Activated CD4-positive, alpha-beta memory T cell treated with anti-CD3 and anti-CD28 coated beads for 36 hours (primary cell): ENCODE measurements at regions of chr13 and their contacts with region 1.

Region 1: GRCh38 chr13:110715395-110716235 is 2.1 kb downstream of the ING1 start:
- DNase-seq: peak; percentile 97
- H3K4me3 Mint-ChIP-seq: peak overlapping the region; percentile 96
- H3K27ac Mint-ChIP-seq: peak overlapping the region; percentile 98
- H3K4me1 Mint-ChIP-seq: peaks cover 33% of the 10 kb centered on the region
- H3K27me3 Mint-ChIP-seq: no peaks in the 10 kb centered on the region

Region 2: GRCh38 chr13:110615322-110616102 is 100.1 kb before region 1 on chr13 and contains the start of gene NAXD:
- CTCF ChIA-PET with region 1: no interaction called
- POLR2A ChIA-PET with region 1: interaction called, 9 read pairs
- intact Hi-C with region 1: loop called (anchors 1 kb)
- DNase-seq: peak; percentile 93
- H3K4me3 Mint-ChIP-seq: peak within 1 kb of the TSS; percentile 94
- H3K27ac Mint-ChIP-seq: peak within 1 kb of the TSS; percentile 88
- H3K4me1 Mint-ChIP-seq: peaks cover 48% of the 10 kb centered on the region
- H3K27me3 Mint-ChIP-seq: no peaks in the 10 kb centered on the region
- total RNA-seq, gene NAXD: 22.6 to 22.9 TPM

Region 3: GRCh38 chr13:110726726-110727125 is 11.1 kb after region 1 on chr13:
- CTCF ChIA-PET with region 1: no interaction called
- POLR2A ChIA-PET with region 1: interaction called, 4 read pairs
- intact Hi-C with region 1: loop called (anchors 1 kb)
- DNase-seq: peak; percentile 86
- H3K4me3 Mint-ChIP-seq: peak overlapping the region; percentile 24
- H3K27ac Mint-ChIP-seq: peak overlapping the region; percentile 71
- H3K4me1 Mint-ChIP-seq: peaks cover 19% of the 10 kb centered on the region
- H3K27me3 Mint-ChIP-seq: no peaks in the 10 kb centered on the region

Region 4: DNA sequence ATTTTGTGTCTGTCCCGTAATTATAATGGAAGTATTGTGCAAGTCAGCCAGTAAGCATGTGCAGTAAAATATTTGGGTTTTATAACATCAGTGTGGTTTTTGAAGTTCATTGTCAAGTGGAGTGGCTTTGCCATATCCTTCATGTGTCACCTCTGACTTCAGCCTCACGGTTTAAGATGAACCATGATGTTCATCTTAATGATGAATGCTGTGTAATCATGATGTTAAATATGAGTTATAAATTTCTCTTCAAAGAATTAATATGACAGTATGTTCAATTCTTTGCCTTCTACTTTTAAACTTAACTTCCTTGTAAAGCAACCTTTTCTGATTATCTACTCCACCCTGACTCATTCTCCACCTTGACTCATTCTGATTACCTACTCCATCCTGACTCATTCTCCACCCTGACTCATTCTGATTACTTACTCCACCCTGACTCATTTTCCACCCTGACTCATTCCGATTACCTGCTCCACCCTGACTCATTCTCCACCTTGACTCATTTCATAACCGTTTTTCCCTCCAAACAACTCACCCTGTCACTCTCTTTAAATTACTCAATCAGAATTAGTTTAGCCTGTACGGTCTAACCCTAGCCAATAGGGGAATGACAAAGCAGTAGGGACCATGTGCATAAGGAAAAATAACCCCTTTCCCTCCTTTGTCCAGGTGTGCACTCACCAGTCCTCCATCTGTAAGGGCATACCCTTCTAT is 249.6 kb after region 1 on chr13:
- CTCF ChIA-PET with region 1: no interaction called
- POLR2A ChIA-PET with region 1: no interaction called
- intact Hi-C with region 1: loop called (anchors 1 kb)
- DNase-seq: peak; percentile 64
- H3K4me3 Mint-ChIP-seq: peak overlapping the region; percentile 25
- H3K27ac Mint-ChIP-seq: peak overlapping the region; percentile 81
- H3K4me1 Mint-ChIP-seq: peaks cover 25% of the 10 kb centered on the region
- H3K27me3 Mint-ChIP-seq: peaks cover 6% of the 10 kb centered on the region

Region 5: GRCh38 chr13:111184458-111185401 is 469.1 kb after region 1 on chr13:
- CTCF ChIA-PET with region 1: no interaction called
- POLR2A ChIA-PET with region 1: no interaction called
- intact Hi-C with region 1: loop called (anchors 10 kb)
- DNase-seq: peak; percentile 60
- H3K4me3 Mint-ChIP-seq: peak overlapping the region; percentile 48
- H3K27ac Mint-ChIP-seq: peak overlapping the region; percentile 80
- H3K4me1 Mint-ChIP-seq: peaks cover 88% of the 10 kb centered on the region
- H3K27me3 Mint-ChIP-seq: no peaks in the 10 kb centered on the region